Activated naive CD4-positive, alpha-beta T cell treated with anti-CD3 and anti-CD28 coated beads for 36 hours (primary cell): ENCODE measurements at regions of chr16 and their contacts with region 1.

Region 1: DNA sequence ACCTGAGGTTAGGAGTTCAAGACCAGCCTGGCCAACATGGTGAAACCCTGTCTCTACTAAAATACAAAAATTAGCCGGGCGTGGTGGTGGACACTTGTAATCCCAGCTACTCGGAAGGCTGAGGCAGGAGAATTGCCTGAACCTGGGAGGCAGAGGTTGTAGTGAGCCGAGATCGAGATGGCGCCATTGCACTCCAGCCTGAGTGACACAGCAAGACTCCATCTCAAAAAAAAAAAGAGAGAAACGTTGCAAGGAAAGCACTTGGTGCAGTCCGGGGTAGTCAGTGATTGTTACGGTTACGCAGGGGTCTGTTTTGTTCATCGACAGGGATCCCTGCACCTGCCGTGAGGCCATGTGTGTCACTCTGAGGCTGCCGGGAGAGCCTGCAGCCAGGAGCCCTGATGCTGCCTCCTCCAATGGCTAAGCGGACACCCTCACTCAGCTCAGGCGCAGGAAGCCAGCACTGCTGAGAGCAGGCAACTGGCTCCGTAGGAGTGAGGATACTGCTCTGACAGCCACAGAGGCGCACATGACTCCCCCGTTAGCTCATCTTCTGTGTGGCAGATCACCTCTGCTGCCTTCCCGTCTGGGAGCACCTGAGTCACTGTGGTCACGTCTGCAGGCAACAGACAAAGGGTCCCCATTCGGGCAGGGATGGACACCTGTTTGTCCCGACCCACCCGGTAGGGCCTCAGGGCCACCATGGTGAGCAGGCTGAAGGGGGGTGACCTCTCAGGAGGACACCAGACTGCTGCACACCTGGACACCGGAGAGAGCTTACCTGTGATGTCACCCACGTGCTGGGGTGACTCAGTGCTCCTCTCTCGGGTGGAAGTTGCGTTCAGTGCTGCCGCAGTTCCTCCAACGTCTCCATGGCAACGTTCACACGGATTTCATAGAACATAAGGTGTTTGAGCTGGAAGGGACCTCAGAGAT is 5.2 kb upstream of the RAB26 start:
- DNase-seq: no peak
- H3K4me3 Mint-ChIP-seq: no peak overlapping the region
- H3K27ac Mint-ChIP-seq: no peak overlapping the region
- H3K4me1 Mint-ChIP-seq: peaks cover 2% of the 10 kb centered on the region
- H3K27me3 Mint-ChIP-seq: no peaks in the 10 kb centered on the region

Region 2: GRCh38 chr16:2016407-2016922 is 126.7 kb before region 1 on chr16:
- CTCF ChIA-PET with region 1: interaction called, 52 read pairs
- intact Hi-C with region 1: no loop called
- DNase-seq: no peak
- H3K4me3 Mint-ChIP-seq: no peak overlapping the region
- H3K27ac Mint-ChIP-seq: no peak overlapping the region
- H3K4me1 Mint-ChIP-seq: peaks cover 2% of the 10 kb centered on the region
- H3K27me3 Mint-ChIP-seq: peaks cover 13% of the 10 kb centered on the region

Region 3: DNA sequence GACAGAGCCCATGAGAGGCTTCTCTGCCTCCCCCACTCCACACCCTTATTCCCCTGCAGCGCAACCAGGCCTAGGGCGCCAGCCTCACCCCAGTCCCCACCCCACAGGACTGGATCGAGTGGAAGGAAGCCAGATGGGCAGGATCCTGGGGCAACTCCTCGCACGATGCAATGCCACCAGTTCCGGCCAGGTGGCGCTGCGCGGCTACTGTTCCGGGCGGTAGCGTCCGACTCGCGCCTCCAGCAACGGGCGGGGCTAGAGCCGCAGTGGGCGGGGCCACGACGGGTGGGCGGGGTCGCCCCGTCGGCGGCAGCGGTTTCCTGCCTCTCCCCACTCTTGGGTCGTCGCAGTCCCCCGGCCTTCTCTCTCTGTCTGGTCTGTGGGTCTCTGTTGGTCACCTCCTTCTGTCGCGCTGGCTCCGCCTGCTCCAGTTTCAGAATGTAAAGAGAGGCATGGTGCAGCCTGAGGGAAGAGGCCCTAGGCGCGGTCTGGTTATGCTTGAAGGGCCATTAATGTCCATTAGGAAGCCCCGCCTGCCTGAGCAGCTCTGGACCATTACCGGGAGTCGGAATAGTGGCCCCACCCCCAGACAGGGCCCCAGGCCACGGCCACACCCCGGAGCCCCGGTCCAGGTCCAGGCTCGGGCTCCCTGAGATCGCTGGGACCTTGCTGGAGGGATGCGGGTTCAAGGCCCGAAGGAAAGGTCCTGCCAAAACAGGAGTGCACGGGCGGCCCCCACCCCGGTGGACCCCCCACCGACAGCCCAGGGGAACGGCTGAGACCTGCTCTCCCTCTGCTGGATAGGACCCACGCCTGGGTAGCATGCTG is 119.9 kb before region 1 on chr16:
- CTCF ChIA-PET with region 1: interaction called, 52 read pairs
- intact Hi-C with region 1: loop called (anchors 1 kb)
- DNase-seq: peak; percentile 97
- H3K4me3 Mint-ChIP-seq: peak overlapping the region; percentile 49
- H3K27ac Mint-ChIP-seq: no peak overlapping the region
- H3K4me1 Mint-ChIP-seq: peaks cover 22% of the 10 kb centered on the region
- H3K27me3 Mint-ChIP-seq: peaks cover 29% of the 10 kb centered on the region

Region 4: GRCh38 chr16:2178321-2179106 is 35.3 kb after region 1 on chr16:
- CTCF ChIA-PET with region 1: no interaction called
- intact Hi-C with region 1: no loop called
- DNase-seq: peak; percentile 12
- H3K4me3 Mint-ChIP-seq: no peak overlapping the region
- H3K27ac Mint-ChIP-seq: no peak overlapping the region
- H3K4me1 Mint-ChIP-seq: no peaks in the 10 kb centered on the region
- H3K27me3 Mint-ChIP-seq: no peaks in the 10 kb centered on the region